Activated naive CD4-positive, alpha-beta T cell treated with anti-CD3 and anti-CD28 coated beads for 36 hours (primary cell): ENCODE measurements at regions of chr7 and their contacts with region 1.

Region 1: DNA sequence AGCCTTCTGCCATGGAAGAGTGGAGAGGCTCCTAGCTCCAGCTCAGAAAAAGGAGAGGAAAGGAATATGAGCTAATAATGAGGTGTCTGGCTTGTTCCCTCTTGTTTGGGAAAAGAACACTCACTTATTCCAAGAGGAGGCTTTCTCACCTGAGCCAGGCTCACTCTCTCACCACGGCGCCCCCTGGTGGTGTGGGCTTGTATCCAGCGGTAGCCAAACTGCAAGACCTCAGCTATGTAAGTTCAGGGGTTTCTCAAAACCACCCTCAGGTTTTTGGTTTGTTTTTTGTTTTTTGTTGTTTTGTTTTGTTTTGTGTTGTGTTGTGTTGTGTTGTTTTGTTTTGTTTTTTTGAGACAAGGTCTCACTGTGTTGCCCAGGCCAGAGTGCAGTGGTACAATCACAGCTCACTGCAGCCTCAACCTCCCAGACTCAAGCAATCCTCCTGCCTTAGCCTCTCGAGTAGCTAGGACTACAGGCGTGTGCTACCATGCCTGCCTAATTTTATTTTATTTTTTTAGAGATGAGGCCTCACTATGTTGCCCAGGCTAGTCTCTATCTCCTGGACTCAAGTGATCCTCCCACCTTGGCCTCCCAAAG is 124.0 kb downstream of the TMEM130 start:
- DNase-seq: peak; percentile 82
- H3K4me3 Mint-ChIP-seq: no peak overlapping the region
- H3K27ac Mint-ChIP-seq: no peak overlapping the region
- H3K4me1 Mint-ChIP-seq: no peaks in the 10 kb centered on the region
- H3K27me3 Mint-ChIP-seq: peaks cover 8% of the 10 kb centered on the region

Region 2: GRCh38 chr7:98294796-98295382 is 450.9 kb before region 1 on chr7:
- CTCF ChIA-PET with region 1: no interaction called
- intact Hi-C with region 1: loop called (anchors 2 kb)
- DNase-seq: peak; percentile 55
- H3K4me3 Mint-ChIP-seq: no peak overlapping the region
- H3K27ac Mint-ChIP-seq: no peak overlapping the region
- H3K4me1 Mint-ChIP-seq: no peaks in the 10 kb centered on the region
- H3K27me3 Mint-ChIP-seq: no peaks in the 10 kb centered on the region

Region 3: DNA sequence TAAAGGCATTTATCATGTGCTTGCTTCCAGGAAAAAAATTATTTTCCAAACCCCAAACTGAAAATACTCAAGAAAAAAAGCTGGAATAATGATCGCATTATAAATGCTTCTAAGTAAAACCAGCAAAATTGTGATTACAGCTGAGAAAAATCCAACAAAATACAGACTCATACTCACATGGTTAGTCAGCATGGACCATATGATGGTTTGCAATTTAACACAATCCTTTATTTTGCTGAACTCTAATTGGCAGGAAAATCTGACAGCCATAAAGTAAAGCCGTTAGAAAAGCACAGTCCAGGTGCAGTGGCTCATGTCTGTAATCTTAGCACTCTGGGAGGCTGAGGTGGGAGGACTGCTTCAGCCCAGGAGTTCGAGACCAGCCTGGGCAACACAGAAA is 404.7 kb before region 1 on chr7:
- CTCF ChIA-PET with region 1: no interaction called
- intact Hi-C with region 1: no loop called
- DNase-seq: no peak
- H3K4me3 Mint-ChIP-seq: no peak overlapping the region
- H3K27ac Mint-ChIP-seq: no peak overlapping the region
- H3K4me1 Mint-ChIP-seq: no peaks in the 10 kb centered on the region
- H3K27me3 Mint-ChIP-seq: no peaks in the 10 kb centered on the region

Region 4: DNA sequence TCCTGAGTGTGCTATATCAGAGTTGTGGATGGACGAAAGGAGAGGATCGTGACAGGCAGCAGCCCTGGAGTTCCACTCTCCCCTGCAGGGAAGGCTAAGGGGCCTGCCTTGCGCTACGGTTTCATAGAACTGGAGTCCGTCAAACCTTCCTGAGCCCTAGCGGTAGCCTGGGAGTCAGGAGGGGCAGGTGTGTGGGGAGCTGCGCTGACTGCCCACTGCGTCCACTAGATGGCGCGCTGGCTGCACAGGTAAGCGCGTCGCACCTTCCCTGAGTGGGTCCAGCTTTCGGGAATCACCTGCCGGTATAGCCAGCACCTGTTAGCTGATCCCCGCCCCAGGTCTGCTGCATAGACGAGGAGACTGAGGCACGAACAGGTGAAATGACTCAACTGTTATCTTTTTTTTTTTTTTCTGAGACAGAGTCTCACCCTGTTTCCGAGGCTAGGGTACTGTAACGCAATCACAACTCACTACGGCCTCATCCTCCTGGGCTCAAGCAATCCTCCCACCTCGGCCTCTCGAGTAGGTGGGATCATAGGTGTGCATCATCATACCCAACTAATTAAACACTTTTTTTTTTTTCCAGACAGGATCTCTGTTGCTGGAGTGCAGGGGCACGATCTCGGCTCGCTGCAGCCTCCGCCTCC is 324.7 kb before region 1 on chr7:
- CTCF ChIA-PET with region 1: interaction called, 10 read pairs
- intact Hi-C with region 1: no loop called
- DNase-seq: peak; percentile 74
- H3K4me3 Mint-ChIP-seq: no peak overlapping the region
- H3K27ac Mint-ChIP-seq: no peak overlapping the region
- H3K4me1 Mint-ChIP-seq: no peaks in the 10 kb centered on the region
- H3K27me3 Mint-ChIP-seq: peaks cover 11% of the 10 kb centered on the region

Region 5: DNA sequence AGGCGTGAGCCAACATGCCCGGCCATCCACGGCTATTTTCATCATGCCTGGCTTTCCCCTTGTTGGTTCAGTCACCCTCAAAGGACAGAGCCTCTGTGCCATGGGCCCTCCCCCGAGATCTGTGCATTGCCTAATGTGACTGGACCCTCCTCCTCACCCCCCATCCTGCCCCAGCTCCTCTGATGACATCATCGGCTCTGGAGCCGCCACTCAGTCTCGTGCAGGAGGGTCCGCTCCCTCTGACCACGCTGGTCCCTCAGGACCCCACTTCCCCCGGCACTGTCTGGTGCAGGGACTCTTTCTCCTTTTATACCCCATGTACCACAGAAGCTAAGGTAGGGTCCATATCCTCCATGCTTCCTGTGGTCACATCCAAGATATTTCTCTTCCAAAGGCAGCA is 311.7 kb before region 1 on chr7:
- CTCF ChIA-PET with region 1: interaction called, 28 read pairs
- intact Hi-C with region 1: loop called (anchors 1 kb)
- DNase-seq: no peak
- H3K4me3 Mint-ChIP-seq: no peak overlapping the region
- H3K27ac Mint-ChIP-seq: no peak overlapping the region
- H3K4me1 Mint-ChIP-seq: peaks cover 3% of the 10 kb centered on the region
- H3K27me3 Mint-ChIP-seq: no peaks in the 10 kb centered on the region

Region 6: GRCh38 chr7:98735801-98736200 is 10.0 kb before region 1 on chr7:
- CTCF ChIA-PET with region 1: interaction called, 12 read pairs
- intact Hi-C with region 1: no loop called
- DNase-seq: no peak
- H3K4me3 Mint-ChIP-seq: no peak overlapping the region
- H3K27ac Mint-ChIP-seq: no peak overlapping the region
- H3K4me1 Mint-ChIP-seq: no peaks in the 10 kb centered on the region
- H3K27me3 Mint-ChIP-seq: peaks cover 3% of the 10 kb centered on the region

Region 7: DNA sequence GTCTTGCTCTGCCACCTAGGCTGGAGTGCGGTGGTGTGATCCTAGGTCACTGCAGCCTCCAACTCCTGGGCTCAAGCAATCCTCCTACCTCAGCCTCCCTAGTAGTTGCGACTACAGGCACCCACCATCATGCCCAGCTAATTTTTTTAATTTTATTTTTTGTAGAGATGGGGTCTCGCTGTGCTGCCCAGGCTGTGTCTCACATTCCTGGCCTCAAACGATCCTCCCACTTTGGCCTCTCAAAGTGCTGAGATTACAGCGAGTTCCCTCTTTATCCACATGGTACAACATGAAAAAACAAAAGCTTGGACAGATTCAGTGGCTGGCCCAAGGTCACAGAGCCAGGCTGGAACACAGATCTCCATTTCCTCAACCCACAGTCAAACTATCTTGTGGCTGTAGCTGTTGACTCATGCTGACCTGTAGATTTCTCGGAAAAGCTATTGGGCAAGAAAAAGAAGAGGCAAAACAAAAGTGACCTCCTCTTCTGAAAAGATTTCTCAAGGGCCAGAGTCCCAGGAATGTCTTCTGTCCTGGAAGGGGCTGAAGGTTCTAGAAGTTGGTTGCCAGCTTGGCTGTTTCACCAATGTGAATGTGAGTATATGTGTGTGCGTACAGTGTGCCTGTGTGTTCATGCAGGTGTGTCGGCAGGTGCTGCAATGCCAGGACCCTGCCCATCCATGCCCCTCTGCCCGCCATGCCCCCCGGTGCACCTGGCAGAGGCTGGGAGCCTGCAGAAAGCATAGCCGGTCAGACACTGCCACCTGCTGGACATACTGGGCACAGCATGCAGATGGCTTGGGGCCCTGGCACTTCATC is 95.6 kb after region 1 on chr7:
- CTCF ChIA-PET with region 1: interaction called, 22 read pairs
- intact Hi-C with region 1: loop called (anchors 1 kb)
- DNase-seq: peak; percentile 79
- H3K4me3 Mint-ChIP-seq: no peak overlapping the region
- H3K27ac Mint-ChIP-seq: no peak overlapping the region
- H3K4me1 Mint-ChIP-seq: no peaks in the 10 kb centered on the region
- H3K27me3 Mint-ChIP-seq: peaks cover 2% of the 10 kb centered on the region

Region 8: GRCh38 chr7:99340659-99341058 is 594.8 kb after region 1 on chr7:
- CTCF ChIA-PET with region 1: no interaction called
- intact Hi-C with region 1: no loop called
- DNase-seq: no peak
- H3K4me3 Mint-ChIP-seq: no peak overlapping the region
- H3K27ac Mint-ChIP-seq: no peak overlapping the region
- H3K4me1 Mint-ChIP-seq: peaks cover 10% of the 10 kb centered on the region
- H3K27me3 Mint-ChIP-seq: no peaks in the 10 kb centered on the region